Prostate gland (tissue), 2 donors: ENCODE measurements at regions of chr5 and their contacts with region 1.

Region 1: DNA sequence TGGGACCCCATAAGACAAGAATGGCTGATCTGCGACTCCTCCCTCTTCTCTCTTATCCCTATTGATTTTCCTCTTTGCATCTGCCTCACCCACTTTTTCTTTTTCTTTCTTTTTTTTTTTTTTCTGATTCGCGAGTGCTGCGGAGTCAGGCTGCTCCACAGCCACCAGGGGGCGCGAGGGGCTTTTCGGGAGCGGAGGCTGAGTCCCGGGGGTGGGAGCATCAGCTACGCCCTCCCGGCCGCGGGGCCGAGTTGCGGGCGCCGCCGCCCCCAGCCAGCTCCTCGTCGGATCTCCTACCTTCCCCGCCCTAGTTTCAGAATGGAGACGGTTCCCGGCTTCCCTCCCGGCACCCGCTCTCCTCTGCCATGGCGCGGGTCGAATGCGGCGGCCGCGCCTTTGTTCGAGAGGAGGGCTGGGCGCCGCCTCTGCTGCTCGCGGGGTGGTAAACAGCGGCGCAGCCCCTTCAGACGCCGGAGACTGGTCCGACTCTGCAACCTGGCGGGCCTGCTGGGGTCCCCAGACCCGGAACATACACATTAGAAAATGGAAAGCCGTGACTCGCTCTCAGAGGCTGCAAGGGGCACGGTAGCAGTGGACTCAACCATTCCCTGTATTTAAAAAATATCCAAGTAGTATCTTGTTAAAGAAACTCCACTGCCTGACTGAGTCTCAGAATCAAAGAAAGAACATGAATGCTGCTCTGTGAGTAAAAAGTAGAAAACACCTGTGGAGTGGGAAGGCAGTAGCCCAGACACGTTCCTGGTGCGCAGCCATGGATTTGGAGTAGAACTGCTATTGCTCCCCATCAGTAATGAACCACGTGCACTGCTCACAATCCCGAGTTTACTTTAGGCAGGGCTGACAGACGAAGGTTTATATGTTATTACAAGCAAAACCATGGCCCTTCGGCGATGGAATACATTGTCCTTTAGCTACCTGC is 55.7 kb downstream of the DPYSL3 start:
- DNase-seq: peak; percentile 79
- H3K4me3 ChIP-seq: peak overlapping the region; percentile 52 to 54
- H3K27ac ChIP-seq: peak overlapping the region; percentile 77 to 87
- H3K4me1 ChIP-seq: no peaks in the 10 kb centered on the region
- H3K27me3 ChIP-seq: no peaks in the 10 kb centered on the region
- CTCF ChIP-seq: peak; percentile 79 to 93 (median 86)
- POLR2A ChIP-seq: no peak

Region 2: GRCh38 chr5:147223948-147224791 is 230.0 kb before region 1 on chr5:
- intact Hi-C with region 1: loop called (anchors 10 kb)
- DNase-seq: no peak
- H3K4me3 ChIP-seq: no peak overlapping the region
- H3K27ac ChIP-seq: no peak overlapping the region
- H3K4me1 ChIP-seq: no peaks in the 10 kb centered on the region
- H3K27me3 ChIP-seq: no peaks in the 10 kb centered on the region
- CTCF ChIP-seq: peak in 3 of 4 experiments; percentile 30 to 56 (median 44)
- POLR2A ChIP-seq: no peak

Region 3: DNA sequence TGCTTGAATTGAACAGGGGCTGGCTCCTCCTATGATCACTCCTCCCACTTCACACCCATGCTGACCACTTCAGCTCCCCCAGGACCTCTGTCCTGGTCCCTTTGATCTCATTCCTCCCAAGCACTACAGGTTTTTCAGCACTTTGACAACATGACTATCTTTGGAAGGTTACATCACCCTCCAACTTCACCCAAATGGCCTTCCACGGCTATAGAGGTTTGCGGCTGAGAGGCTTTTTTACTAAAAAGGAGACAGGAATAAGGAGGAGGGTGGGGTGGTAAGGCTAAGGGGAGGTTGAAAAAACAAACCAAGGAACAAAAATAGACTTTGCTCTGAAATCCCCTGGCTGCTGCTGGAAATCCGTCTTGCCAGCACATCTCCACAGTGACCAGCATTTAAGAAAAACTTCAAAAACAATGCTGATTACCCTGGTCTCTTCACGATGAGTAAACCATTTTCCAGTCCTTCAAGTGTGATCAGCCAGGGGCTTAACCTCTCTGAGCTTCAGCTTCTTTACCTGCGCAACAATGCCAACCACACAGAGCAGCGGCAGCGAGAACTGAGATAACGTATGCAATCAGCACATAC is 47.0 kb before region 1 on chr5:
- intact Hi-C with region 1: loop called (anchors 2 kb)
- DNase-seq: no peak
- H3K4me3 ChIP-seq: no peak overlapping the region
- H3K27ac ChIP-seq: peak overlapping the region; percentile 71
- H3K4me1 ChIP-seq: no peaks in the 10 kb centered on the region
- H3K27me3 ChIP-seq: no peaks in the 10 kb centered on the region
- CTCF ChIP-seq: no peak
- POLR2A ChIP-seq: no peak

Region 4: DNA sequence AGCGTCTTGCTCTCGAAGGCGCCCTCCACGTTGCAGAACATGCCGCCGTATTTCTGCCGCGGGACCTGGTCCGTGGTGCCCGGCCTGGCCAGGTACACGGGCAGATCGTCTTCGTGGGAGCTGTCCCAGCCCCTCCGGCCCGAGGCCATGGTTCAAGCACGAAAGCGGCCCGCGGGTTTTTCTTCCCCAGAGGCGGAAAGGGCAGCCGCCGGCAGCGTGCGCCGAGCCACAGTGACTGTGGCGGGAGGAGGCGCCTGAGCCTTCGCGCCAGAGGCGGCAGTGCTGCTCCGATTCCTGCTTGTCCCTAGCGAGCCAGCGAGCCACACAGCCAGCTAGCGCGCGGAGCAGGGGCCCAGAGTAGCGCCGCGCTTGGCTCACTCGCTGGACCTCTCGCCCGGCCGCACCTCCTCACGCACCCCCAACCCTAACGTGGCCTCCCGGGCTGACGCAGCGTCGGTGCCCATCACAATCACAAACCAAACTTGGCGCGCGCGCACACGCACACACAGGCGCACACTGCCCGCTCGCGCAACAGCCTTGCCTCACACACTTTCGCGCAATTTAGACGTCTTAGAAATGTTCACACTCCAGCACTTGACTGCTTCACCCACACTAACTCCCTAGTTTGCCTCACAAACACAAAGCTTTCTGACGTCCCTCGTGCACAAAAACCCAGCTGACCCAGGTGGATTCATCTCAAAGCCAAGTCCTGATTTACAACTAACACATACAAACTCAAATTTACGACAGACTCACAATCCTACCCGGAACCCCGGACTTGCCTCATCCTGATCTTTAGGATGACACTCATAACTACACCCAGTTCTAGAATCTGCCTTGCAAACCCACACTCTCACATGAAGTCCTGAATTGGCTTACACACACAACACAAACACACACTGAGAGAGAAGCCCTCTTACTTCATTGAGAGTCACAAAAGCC is 55.8 kb after region 1 on chr5 and contains the start of gene DPYSL3:
- intact Hi-C with region 1: loop called (anchors 2 kb)
- DNase-seq: peak; percentile 79
- H3K4me3 ChIP-seq: peak within 1 kb of the TSS; percentile 65 to 68
- H3K27ac ChIP-seq: peak within 1 kb of the TSS; percentile 78 to 87
- H3K4me1 ChIP-seq: peaks cover 11% of the 10 kb centered on the region
- H3K27me3 ChIP-seq: no peaks in the 10 kb centered on the region
- CTCF ChIP-seq: peak in 2 of 4 experiments; percentile 32 to 54
- POLR2A ChIP-seq: peak; percentile 40
- total RNA-seq, gene DPYSL3: 113 to 126 TPM

Region 5: GRCh38 chr5:147558826-147559225 is 104.7 kb after region 1 on chr5:
- intact Hi-C with region 1: loop called (anchors 2 kb)
- DNase-seq: peak; percentile 63
- H3K4me3 ChIP-seq: no peak overlapping the region
- H3K27ac ChIP-seq: no peak overlapping the region
- H3K4me1 ChIP-seq: peaks cover 6% of the 10 kb centered on the region
- H3K27me3 ChIP-seq: no peaks in the 10 kb centered on the region
- CTCF ChIP-seq: peak; percentile 39 to 76 (median 70)
- POLR2A ChIP-seq: no peak

Region 6: GRCh38 chr5:147576646-147577535 is 122.7 kb after region 1 on chr5:
- intact Hi-C with region 1: loop called (anchors 5 kb)
- DNase-seq: peak; percentile 19
- H3K4me3 ChIP-seq: no peak overlapping the region
- H3K27ac ChIP-seq: no peak overlapping the region
- H3K4me1 ChIP-seq: no peaks in the 10 kb centered on the region
- H3K27me3 ChIP-seq: no peaks in the 10 kb centered on the region
- CTCF ChIP-seq: peak; percentile 51 to 77 (median 61)
- POLR2A ChIP-seq: no peak

Region 7: DNA sequence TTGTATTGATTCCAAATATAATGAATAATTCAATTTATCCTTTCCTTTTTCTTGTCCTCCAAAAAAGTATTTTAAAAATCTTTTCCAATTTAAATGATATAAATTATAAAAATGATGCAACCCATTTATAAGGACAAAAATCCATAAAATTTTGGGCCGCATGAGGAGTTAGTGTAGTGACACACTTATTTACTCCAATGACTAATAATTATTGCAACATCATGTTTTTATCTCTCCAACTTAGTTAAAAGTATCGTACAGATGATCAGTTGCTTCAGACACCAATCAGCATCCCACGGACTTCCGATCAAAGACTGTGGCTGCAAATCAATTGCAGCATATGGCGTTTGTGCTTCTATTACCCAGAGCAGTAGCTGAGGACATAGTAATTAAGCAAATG is 1141.6 kb after region 1 on chr5:
- intact Hi-C with region 1: no loop called
- DNase-seq: no peak
- H3K4me3 ChIP-seq: no peak overlapping the region
- H3K27ac ChIP-seq: no peak overlapping the region
- H3K4me1 ChIP-seq: no peaks in the 10 kb centered on the region
- H3K27me3 ChIP-seq: no peaks in the 10 kb centered on the region
- CTCF ChIP-seq: no peak
- POLR2A ChIP-seq: no peak